OCI-LY7 (cell line): ENCODE measurements at regions of chr4 and their contacts with region 1.

Region 1: DNA sequence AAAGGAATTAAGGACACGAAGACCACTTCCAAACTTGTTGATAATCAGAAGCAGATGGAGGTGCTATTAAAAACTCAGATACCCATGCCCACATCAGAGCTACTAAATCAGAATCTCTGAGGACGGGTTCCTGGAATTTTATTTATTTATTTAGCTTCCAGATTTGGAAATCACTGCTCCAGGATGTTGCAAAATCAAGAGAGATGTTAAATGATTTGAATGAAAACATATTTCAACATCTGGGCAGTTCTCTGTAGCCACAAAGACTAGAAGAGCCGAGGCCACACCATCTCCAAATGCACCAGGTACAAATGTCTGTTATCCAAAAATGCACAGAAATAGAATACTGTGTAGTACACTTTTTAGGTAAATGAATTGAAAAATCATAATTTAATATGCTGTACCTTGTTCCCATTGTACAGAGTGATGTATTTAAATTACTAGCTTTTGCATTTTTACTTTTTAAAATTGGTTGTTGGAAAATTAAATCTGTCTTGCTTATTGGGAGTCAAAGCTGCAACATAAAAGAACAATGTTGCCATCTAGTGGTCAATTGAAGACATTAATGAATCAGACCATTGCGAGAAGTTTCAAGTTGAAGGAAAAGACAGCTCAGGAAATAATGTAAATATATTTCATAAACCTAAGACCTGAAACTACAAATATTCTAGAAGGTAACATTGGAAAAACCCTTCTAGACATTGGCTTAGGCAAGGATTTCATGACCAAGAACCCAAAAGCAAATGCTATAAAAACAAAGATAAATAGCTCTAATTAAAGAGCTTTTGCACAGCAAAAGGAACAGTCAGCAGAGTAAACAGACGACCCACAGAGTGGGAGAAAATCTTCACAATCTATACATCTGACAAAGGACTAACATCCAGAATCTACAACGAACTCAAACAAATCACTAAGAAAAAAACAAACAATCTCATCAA is 151.3 kb upstream of the TTC29 start:
- DNase-seq: peak; percentile 58
- H3K4me3 ChIP-seq: no peak overlapping the region
- H3K27ac ChIP-seq: no peak overlapping the region
- H3K4me1 ChIP-seq: no peaks in the 10 kb centered on the region
- CTCF ChIP-seq: peak; percentile 86

Region 2: GRCh38 chr4:146243141-146243882 is 853.6 kb before region 1 on chr4:
- CTCF ChIA-PET with region 1: no interaction called
- POLR2A ChIA-PET with region 1: no interaction called
- intact Hi-C with region 1: loop called (anchors 2 kb)
- DNase-seq: peak; percentile 10
- H3K4me3 ChIP-seq: no peak overlapping the region
- H3K27ac ChIP-seq: no peak overlapping the region
- H3K4me1 ChIP-seq: peaks cover 6% of the 10 kb centered on the region
- CTCF ChIP-seq: peak; percentile 84

Region 3: DNA sequence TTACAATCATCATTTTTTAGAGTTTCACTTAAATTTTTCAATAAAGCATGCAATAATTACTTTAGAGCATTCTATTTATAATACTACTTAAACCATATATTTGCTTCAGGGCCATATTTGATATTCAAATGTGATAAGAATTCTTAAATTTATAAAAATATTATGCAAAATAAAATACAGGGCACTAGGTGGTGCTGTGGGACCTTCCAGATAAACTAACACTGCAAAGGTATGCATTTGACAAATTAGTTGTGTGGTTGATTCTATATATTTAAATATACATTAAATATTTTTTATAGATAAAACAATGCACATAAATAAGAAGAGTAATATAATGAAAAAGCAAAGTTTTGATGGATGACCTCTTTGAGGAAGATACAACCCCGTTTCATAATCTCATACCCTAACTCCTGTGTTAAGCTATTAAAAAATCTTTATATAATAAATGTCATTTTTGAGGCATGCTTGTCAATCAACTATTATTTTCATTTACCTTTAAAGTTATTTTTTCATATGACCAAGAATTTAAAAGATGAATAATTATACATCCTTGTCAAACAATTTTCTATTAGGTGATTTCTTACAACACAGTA is 754.2 kb before region 1 on chr4:
- CTCF ChIA-PET with region 1: no interaction called
- POLR2A ChIA-PET with region 1: no interaction called
- intact Hi-C with region 1: loop called (anchors 2 kb)
- DNase-seq: peak; percentile 42
- H3K4me3 ChIP-seq: no peak overlapping the region
- H3K27ac ChIP-seq: no peak overlapping the region
- H3K4me1 ChIP-seq: peaks cover 5% of the 10 kb centered on the region
- CTCF ChIP-seq: peak; percentile 79

Region 4: GRCh38 chr4:147019061-147019460 is 77.9 kb before region 1 on chr4:
- CTCF ChIA-PET with region 1: interaction called, 9 read pairs
- POLR2A ChIA-PET with region 1: no interaction called
- intact Hi-C with region 1: loop called (anchors 2 kb)
- DNase-seq: peak; percentile 48
- H3K4me3 ChIP-seq: no peak overlapping the region
- H3K27ac ChIP-seq: no peak overlapping the region
- H3K4me1 ChIP-seq: no peaks in the 10 kb centered on the region
- CTCF ChIP-seq: peak; percentile 79

Region 5: DNA sequence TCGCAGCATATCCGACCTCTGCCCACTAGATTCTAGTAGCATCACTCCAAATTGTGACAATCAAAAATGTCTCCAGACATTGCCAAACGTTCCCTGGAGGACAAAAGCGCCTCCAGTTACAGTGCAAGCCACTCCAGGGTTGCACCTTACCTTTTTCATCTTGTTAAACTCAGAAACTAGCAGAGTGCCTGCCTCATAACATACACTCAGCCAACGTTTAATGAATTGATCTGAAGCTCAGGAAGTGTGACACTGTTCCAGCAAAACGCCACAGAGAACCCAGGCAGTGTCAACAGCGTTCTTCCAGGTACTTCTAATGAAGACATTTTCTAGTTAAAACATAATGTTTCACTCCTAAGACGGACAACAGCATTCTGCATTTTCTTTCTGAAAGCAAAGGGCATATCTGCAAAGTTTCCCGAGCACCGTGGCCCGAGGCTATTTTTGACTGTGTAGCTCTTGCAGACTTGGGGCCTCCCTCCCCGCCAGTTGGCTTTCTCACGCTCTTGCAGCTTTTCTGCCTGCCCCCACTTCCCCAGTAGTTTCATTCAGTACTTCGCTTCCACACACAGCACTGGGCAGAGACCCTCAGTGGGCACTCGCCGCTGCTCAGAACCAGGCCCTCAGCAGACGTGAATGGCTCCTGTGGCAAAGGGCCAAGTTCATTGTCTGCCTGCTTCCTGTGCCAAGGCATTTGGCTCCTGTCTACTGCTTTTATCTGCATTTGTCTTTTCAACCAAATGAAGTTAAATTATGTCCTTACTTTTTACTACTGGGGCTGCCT is 17.9 kb before region 1 on chr4:
- CTCF ChIA-PET with region 1: no interaction called
- POLR2A ChIA-PET with region 1: no interaction called
- intact Hi-C with region 1: no loop called
- DNase-seq: no peak
- H3K4me3 ChIP-seq: no peak overlapping the region
- H3K27ac ChIP-seq: no peak overlapping the region
- H3K4me1 ChIP-seq: no peaks in the 10 kb centered on the region
- CTCF ChIP-seq: no peak